CD8-positive, alpha-beta T cell (primary cell): ENCODE measurements at regions of chr19 and their contacts with region 1.

Region 1: DNA sequence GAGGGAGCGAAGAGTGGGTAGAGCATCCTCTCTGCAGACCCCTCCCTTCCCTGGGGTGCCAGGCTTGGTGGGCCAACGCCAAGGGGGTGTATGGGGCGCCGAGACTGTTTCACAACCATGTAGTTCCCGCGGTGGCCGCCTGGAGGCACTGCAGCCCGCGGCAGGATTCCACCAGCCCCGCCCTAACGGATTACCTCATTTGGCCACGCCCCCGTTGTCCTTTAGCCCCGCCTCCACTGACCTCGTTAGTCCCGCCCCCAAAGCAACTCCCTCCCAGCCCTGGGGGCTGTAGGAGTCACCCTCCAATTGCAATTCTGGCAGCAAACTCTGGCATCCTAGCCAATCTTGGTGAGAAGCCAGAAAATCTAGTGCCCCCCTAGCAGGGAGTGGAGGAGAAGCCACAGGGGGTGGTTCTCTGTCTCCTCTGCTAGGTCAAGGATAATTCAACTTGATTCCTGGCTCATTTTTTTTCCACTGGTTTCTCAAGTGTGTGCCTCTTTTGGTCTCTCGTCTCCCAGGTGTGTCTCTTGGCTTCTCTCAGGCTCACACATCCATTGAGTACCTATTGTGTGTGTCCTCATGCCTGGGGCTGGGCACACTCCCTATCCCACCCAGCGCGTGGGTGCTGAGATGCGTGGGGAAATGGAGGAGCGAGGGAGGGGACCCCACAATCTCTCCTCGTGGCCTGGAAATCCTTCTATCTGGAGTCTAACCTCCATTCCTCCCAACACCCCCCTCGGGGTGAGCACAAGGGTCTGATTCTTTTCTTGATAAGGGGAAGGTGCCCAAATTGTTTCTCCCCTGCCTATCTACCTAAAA is 2.0 kb downstream of the OLFM2 start:
- DNase-seq: peak; percentile 63 to 90 (median 80)
- ATAC-seq: peak; percentile 92
- H3K4me3 ChIP-seq: no peak overlapping the region
- H3K4me3 Mint-ChIP-seq: no peak overlapping the region
- H3K27ac ChIP-seq: no peak overlapping the region
- H3K27ac Mint-ChIP-seq: no peak overlapping the region
- H3K4me1 ChIP-seq: peaks cover 21% of the 10 kb centered on the region
- H3K4me1 Mint-ChIP-seq: peaks cover 30% of the 10 kb centered on the region
- H3K27me3 ChIP-seq: peaks cover 6 to 38% of the 10 kb centered on the region in 2 experiments
- H3K27me3 Mint-ChIP-seq: peaks cover 51% of the 10 kb centered on the region
- CTCF ChIP-seq: peak; percentile 89

Region 2: GRCh38 chr19:9671655-9672054 is 262.7 kb before region 1 on chr19:
- CTCF ChIA-PET with region 1: no interaction called
- POLR2A ChIA-PET with region 1: no interaction called
- intact Hi-C with region 1: no loop called
- DNase-seq: no peak
- ATAC-seq: no peak
- H3K4me3 ChIP-seq: no peak overlapping the region
- H3K4me3 Mint-ChIP-seq: no peak overlapping the region
- H3K27ac ChIP-seq: no peak overlapping the region
- H3K27ac Mint-ChIP-seq: no peak overlapping the region
- H3K4me1 ChIP-seq: no peaks in the 10 kb centered on the region
- H3K4me1 Mint-ChIP-seq: peaks cover 41% of the 10 kb centered on the region
- H3K27me3 ChIP-seq: no peaks in the 10 kb centered on the region
- H3K27me3 Mint-ChIP-seq: no peaks in the 10 kb centered on the region
- CTCF ChIP-seq: no peak

Region 3: DNA sequence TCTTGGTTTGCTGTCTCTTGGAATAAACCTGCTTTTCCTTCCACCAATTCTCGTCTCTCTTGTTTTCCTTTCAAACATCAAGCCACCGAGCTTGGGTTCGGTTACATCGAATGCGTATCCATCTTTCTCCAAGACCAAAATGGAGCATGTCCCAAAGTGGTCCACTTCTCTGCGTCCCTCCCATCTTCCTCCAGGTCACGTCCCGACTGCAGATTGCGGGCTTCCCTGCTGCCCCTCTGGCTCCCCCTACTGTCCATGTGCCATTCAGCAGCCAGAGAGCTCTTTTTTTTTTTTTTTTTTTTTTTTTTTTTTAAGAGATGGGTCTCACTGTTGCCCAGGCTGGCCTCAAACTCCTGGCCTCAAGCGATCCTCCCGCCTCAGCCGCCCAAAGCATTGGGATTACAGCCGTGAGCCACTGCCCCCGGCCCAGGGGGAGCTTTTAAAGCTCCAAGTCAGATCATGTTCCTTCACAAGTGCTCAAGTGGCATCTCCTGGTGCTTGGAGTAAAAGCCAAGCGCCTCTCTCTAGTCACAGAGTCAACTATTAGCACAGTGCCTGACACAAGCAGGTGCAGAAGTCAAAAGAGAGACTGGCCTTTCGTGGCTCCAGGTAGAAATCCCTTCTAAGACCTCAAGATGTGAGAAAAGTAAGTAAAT is 66.0 kb after region 1 on chr19:
- CTCF ChIA-PET with region 1: interaction called, 21 read pairs
- POLR2A ChIA-PET with region 1: no interaction called
- intact Hi-C with region 1: loop called (anchors 1 kb)
- DNase-seq: peak; percentile 30 to 80 (median 64)
- ATAC-seq: peak; percentile 42
- H3K4me3 ChIP-seq: no peak overlapping the region
- H3K4me3 Mint-ChIP-seq: no peak overlapping the region
- H3K27ac ChIP-seq: no peak overlapping the region
- H3K27ac Mint-ChIP-seq: no peak overlapping the region
- H3K4me1 ChIP-seq: no peaks in the 10 kb centered on the region
- H3K4me1 Mint-ChIP-seq: peaks cover 13% of the 10 kb centered on the region
- H3K27me3 ChIP-seq: peaks cover 0 to 5% of the 10 kb centered on the region in 2 experiments
- H3K27me3 Mint-ChIP-seq: peaks cover 40% of the 10 kb centered on the region
- CTCF ChIP-seq: peak; percentile 72

Region 4: GRCh38 chr19:10112895-10113591 is 178.7 kb after region 1 on chr19:
- CTCF ChIA-PET with region 1: interaction called, 8 read pairs
- POLR2A ChIA-PET with region 1: no interaction called
- intact Hi-C with region 1: loop called (anchors 2 to 5 kb)
- DNase-seq: peak in 8 of 9 experiments; percentile 46 to 90 (median 76)
- ATAC-seq: peak; percentile 59
- H3K4me3 ChIP-seq: peak overlapping the region in 1 of 2 experiments; percentile 54
- H3K4me3 Mint-ChIP-seq: peak overlapping the region; percentile 67
- H3K27ac ChIP-seq: peak overlapping the region; percentile 44 to 90
- H3K27ac Mint-ChIP-seq: peak overlapping the region; percentile 89
- H3K4me1 ChIP-seq: peaks cover 39% of the 10 kb centered on the region
- H3K4me1 Mint-ChIP-seq: peaks cover 44% of the 10 kb centered on the region
- H3K27me3 ChIP-seq: no peaks in the 10 kb centered on the region
- H3K27me3 Mint-ChIP-seq: no peaks in the 10 kb centered on the region
- CTCF ChIP-seq: peak; percentile 63

Region 5: DNA sequence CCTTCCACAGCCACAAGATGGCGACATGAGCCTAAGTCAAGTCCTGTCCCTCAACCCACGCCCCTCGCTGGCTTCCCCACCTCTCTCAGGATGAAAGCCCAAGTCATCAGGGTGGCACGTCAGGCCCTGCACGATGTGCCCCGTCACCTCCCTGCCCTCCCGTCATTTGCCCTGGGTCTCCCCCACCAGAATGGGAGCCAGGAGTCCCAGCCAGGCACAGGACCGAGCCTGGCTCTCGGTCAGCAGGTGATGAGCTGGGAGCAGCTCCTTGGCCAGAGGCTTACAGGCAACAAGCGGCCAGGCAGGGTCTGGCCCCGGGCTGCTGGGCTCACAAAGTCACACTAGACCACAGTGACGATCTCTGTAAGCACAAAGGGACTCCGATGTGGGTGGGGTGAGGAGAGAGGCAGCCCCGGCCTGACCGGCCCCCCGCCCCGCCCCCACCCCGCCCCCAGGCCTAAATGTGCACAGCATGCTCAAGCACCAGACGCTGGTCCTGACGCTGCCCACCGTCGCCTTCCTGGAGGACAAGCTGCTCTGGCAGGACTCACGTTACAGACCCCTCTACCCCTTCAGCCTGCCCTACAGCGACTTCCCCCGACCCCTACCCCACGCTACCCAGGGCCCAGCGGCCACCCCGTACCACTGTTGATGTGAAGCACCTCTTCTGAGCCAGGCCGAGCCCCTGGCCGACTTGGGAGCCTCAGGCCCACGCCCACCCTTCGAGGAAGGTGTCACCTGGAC is 325.0 kb after region 1 on chr19:
- CTCF ChIA-PET with region 1: interaction called, 16 read pairs
- POLR2A ChIA-PET with region 1: no interaction called
- intact Hi-C with region 1: loop called in 1 of 2 experiments (anchors 2 kb)
- DNase-seq: peak; percentile 68 to 93 (median 86)
- ATAC-seq: peak; percentile 98
- H3K4me3 ChIP-seq: no peak overlapping the region
- H3K4me3 Mint-ChIP-seq: no peak overlapping the region
- H3K27ac ChIP-seq: no peak overlapping the region
- H3K27ac Mint-ChIP-seq: no peak overlapping the region
- H3K4me1 ChIP-seq: no peaks in the 10 kb centered on the region
- H3K4me1 Mint-ChIP-seq: peaks cover 5% of the 10 kb centered on the region
- H3K27me3 ChIP-seq: no peaks in the 10 kb centered on the region
- H3K27me3 Mint-ChIP-seq: no peaks in the 10 kb centered on the region
- CTCF ChIP-seq: peak; percentile 58

Region 6: DNA sequence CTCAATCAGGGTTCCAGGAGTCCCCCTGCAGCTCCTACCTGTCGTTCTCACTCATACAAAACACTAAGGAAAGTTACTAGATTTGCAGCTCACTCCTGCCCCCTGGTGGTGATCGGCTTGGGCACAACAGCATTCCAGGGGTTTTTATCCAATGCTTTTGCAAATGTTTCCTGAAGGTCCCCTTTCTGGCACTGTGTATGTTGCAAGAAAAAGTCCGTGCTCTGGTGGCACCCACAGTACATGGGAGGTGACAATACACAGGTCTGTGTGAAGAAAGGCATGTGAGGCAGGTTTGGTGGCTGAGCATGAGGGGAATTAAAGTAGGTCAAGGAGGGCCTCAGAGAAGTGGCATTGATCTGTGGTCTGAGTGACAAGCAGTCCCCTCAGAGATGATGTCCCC is 454.6 kb after region 1 on chr19:
- CTCF ChIA-PET with region 1: interaction called, 30 read pairs
- POLR2A ChIA-PET with region 1: no interaction called
- intact Hi-C with region 1: loop called in 1 of 2 experiments (anchors 1 kb)
- DNase-seq: peak; percentile 64 to 92 (median 84)
- ATAC-seq: peak; percentile 65
- H3K4me3 ChIP-seq: no peak overlapping the region
- H3K4me3 Mint-ChIP-seq: no peak overlapping the region
- H3K27ac ChIP-seq: no peak overlapping the region
- H3K27ac Mint-ChIP-seq: no peak overlapping the region
- H3K4me1 ChIP-seq: no peaks in the 10 kb centered on the region
- H3K4me1 Mint-ChIP-seq: peaks cover 5% of the 10 kb centered on the region
- H3K27me3 ChIP-seq: no peaks in the 10 kb centered on the region
- H3K27me3 Mint-ChIP-seq: no peaks in the 10 kb centered on the region
- CTCF ChIP-seq: peak; percentile 95